B cell (primary cell): ENCODE measurements at regions of chr15 and their contacts with region 1.

Region 1: DNA sequence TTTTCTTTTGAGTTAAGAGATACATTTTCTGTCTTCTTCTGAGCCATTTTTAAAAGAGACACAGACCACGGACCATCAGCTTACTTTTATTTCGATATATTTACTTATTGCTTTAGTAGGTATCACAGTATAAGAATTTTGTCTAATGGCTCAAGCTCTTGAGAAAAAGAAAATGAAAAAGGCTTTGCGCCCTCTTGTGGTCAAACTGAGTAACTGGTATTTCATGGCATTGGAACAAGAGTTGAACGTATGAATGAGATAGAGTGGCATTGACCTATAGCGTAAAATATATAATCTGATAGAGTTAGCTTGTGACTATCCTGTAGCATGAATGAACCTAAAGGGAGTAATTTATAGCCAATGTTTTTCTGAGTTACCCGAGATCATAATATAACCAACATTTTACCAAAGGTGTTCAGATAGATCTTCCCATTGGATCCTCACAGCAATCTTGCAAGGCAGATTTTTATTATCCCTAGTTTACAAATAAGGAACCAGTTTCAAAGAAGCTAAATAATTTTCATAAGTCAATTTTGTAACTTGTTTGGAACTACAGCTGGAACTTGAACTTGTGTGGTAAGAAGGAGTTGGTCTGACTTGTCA is 154.6 kb downstream of the POLR2M start:
- DNase-seq: peak; percentile 69
- ATAC-seq: no peak
- H3K4me3 ChIP-seq: no peak overlapping the region
- H3K4me3 Mint-ChIP-seq: no peak overlapping the region
- H3K27ac ChIP-seq: no peak overlapping the region
- H3K27ac Mint-ChIP-seq: no peak overlapping the region
- H3K4me1 ChIP-seq: no peaks in the 10 kb centered on the region
- H3K4me1 Mint-ChIP-seq: no peaks in the 10 kb centered on the region
- H3K27me3 ChIP-seq: peaks cover 0 to 2% (median under 1%) of the 10 kb centered on the region in 4 experiments
- H3K27me3 Mint-ChIP-seq: peaks cover 52% of the 10 kb centered on the region
- CTCF ChIP-seq: peak; percentile 93

Region 2: DNA sequence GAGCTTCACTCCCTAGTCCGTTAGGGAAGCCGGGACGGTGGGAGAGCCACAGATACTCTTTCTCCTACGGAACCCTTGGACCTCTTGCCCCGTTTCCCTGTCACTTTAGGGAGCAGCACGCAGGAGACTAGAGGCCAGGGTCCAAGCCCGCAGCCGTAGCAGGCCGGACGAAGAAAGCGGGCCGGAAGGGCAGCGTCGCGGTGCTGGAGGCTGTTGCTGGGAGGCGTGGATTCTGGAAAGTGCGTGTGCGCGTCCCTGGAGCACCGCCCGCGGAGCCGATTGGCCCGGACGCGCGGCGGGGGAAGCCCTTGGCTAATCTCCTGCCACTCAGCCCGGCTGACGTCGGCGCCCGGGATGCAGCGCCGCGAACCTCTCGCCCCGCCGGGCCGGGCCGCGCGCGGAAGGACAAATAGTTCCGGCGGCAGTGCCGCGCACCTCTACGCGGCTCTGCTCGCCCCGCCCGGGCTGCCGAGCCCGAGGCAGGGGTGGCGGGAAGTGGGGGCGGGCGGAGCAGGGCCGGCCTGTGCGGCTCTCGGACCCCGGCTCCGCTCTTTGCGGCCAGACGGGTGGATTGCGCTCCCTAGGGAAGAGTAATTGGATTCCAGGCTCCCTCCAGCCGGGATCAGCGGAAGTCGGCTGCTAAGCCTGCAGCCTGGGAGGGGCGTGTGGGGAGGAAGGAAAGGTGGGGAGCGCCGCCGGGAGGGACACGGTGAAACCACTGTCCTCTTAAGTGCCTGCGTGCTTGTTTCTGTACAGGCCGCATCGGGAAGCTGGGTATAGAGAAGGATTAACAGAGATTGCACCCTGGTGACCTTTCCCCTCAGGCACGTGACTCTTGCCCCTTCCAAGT is 974.0 kb before region 1 on chr15:
- CTCF ChIA-PET with region 1: no interaction called
- POLR2A ChIA-PET with region 1: no interaction called
- intact Hi-C with region 1: no loop called
- DNase-seq: peak; percentile 91
- ATAC-seq: peak; percentile 80
- H3K4me3 ChIP-seq: peak overlapping the region; percentile 78 to 85 (median 78)
- H3K4me3 Mint-ChIP-seq: peak overlapping the region; percentile 92
- H3K27ac ChIP-seq: peak overlapping the region; percentile 85 to 95
- H3K27ac Mint-ChIP-seq: peak overlapping the region; percentile 95
- H3K4me1 ChIP-seq: peaks cover 24 to 27% of the 10 kb centered on the region in 2 donors
- H3K4me1 Mint-ChIP-seq: peaks cover 35% of the 10 kb centered on the region
- H3K27me3 ChIP-seq: no peaks in the 10 kb centered on the region
- H3K27me3 Mint-ChIP-seq: no peaks in the 10 kb centered on the region
- CTCF ChIP-seq: no peak

Region 3: GRCh38 chr15:57079931-57080620 is 781.1 kb before region 1 on chr15:
- CTCF ChIA-PET with region 1: no interaction called
- POLR2A ChIA-PET with region 1: no interaction called
- intact Hi-C with region 1: no loop called
- DNase-seq: peak; percentile 20
- ATAC-seq: no peak
- H3K4me3 ChIP-seq: no peak overlapping the region
- H3K4me3 Mint-ChIP-seq: no peak overlapping the region
- H3K27ac ChIP-seq: no peak overlapping the region
- H3K27ac Mint-ChIP-seq: no peak overlapping the region
- H3K4me1 ChIP-seq: peaks cover 6 to 8% of the 10 kb centered on the region in 2 donors
- H3K4me1 Mint-ChIP-seq: peaks cover 27% of the 10 kb centered on the region
- H3K27me3 ChIP-seq: no peaks in the 10 kb centered on the region
- H3K27me3 Mint-ChIP-seq: no peaks in the 10 kb centered on the region
- CTCF ChIP-seq: no peak

Region 4: GRCh38 chr15:57556040-57556439 is 305.1 kb before region 1 on chr15:
- CTCF ChIA-PET with region 1: interaction called, 68 read pairs
- POLR2A ChIA-PET with region 1: interaction called, 3 read pairs
- intact Hi-C with region 1: loop called (anchors 1 kb)
- DNase-seq: no peak
- ATAC-seq: no peak
- H3K4me3 ChIP-seq: no peak overlapping the region
- H3K4me3 Mint-ChIP-seq: no peak overlapping the region
- H3K27ac ChIP-seq: no peak overlapping the region
- H3K27ac Mint-ChIP-seq: no peak overlapping the region
- H3K4me1 ChIP-seq: peaks cover 3% of the 10 kb centered on the region in 2 donors
- H3K4me1 Mint-ChIP-seq: peaks cover 2% of the 10 kb centered on the region
- H3K27me3 ChIP-seq: peaks cover 0 to 2% (median 0%) of the 10 kb centered on the region in 4 experiments
- H3K27me3 Mint-ChIP-seq: peaks cover 4% of the 10 kb centered on the region
- CTCF ChIP-seq: no peak

Region 5: DNA sequence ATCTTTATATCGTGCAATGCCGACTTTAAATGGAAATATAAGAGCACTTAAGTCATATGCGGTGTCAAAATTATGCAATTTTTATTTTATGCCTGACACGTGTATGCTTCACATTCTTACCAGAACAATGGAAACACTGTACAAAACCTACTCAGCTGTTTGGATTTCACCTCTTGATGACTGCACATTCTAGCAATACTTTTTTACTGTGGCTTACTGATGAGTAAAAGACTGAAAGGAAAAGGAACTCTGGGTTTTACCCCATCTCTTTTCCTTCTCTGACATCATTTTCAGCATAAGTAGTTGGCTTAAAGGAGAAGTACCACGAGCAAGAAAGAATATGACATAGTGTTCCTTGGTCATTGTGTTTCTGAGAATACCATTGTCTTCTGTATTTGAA is 11.8 kb before region 1 on chr15:
- CTCF ChIA-PET with region 1: interaction called, 42 read pairs
- POLR2A ChIA-PET with region 1: no interaction called
- intact Hi-C with region 1: no loop called
- DNase-seq: no peak
- ATAC-seq: no peak
- H3K4me3 ChIP-seq: no peak overlapping the region
- H3K4me3 Mint-ChIP-seq: no peak overlapping the region
- H3K27ac ChIP-seq: no peak overlapping the region
- H3K27ac Mint-ChIP-seq: no peak overlapping the region
- H3K4me1 ChIP-seq: no peaks in the 10 kb centered on the region
- H3K4me1 Mint-ChIP-seq: no peaks in the 10 kb centered on the region
- H3K27me3 ChIP-seq: peaks cover 0 to 8% (median 3%) of the 10 kb centered on the region in 4 experiments
- H3K27me3 Mint-ChIP-seq: peaks cover 54% of the 10 kb centered on the region
- CTCF ChIP-seq: no peak

Region 6: GRCh38 chr15:57872281-57873030 is 11.3 kb after region 1 on chr15:
- CTCF ChIA-PET with region 1: interaction called, 35 read pairs
- POLR2A ChIA-PET with region 1: no interaction called
- intact Hi-C with region 1: no loop called
- DNase-seq: no peak
- ATAC-seq: no peak
- H3K4me3 ChIP-seq: no peak overlapping the region
- H3K4me3 Mint-ChIP-seq: no peak overlapping the region
- H3K27ac ChIP-seq: no peak overlapping the region
- H3K27ac Mint-ChIP-seq: no peak overlapping the region
- H3K4me1 ChIP-seq: peaks cover 0 to 4% of the 10 kb centered on the region in 2 donors
- H3K4me1 Mint-ChIP-seq: peaks cover 8% of the 10 kb centered on the region
- H3K27me3 ChIP-seq: peaks cover 0 to 25% (median 16%) of the 10 kb centered on the region in 4 experiments
- H3K27me3 Mint-ChIP-seq: peaks cover 63% of the 10 kb centered on the region
- CTCF ChIP-seq: no peak